ENCODE measurements at regions of chr9 and their contacts with region 1.

Region 1: GRCh38 chr9:6616951-6617602 is 28.5 kb downstream of the GLDC start:
- DNase-seq: no peak
- ATAC-seq: no peak
- H3K4me3 Mint-ChIP-seq: no peak overlapping the region
- H3K27ac Mint-ChIP-seq: no peak overlapping the region
- H3K4me1 Mint-ChIP-seq: no peaks in the 10 kb centered on the region
- H3K27me3 Mint-ChIP-seq: peaks cover 3% of the 10 kb centered on the region

Region 2: GRCh38 chr9:6153425-6153824 is 463.7 kb before region 1 on chr9:
- CTCF ChIA-PET with region 1: no interaction called
- POLR2A ChIA-PET with region 1: no interaction called
- intact Hi-C with region 1: no loop called
- DNase-seq: no peak
- ATAC-seq: peak; percentile 26
- H3K4me3 Mint-ChIP-seq: no peak overlapping the region
- H3K27ac Mint-ChIP-seq: no peak overlapping the region
- H3K4me1 Mint-ChIP-seq: no peaks in the 10 kb centered on the region
- H3K27me3 Mint-ChIP-seq: peaks cover 21% of the 10 kb centered on the region

Region 3: GRCh38 chr9:7336356-7337065 is 719.4 kb after region 1 on chr9:
- CTCF ChIA-PET with region 1: no interaction called
- POLR2A ChIA-PET with region 1: no interaction called
- intact Hi-C with region 1: loop called in 1 of 2 experiments (anchors 5 kb)
- DNase-seq: no peak
- ATAC-seq: no peak
- H3K4me3 Mint-ChIP-seq: no peak overlapping the region
- H3K27ac Mint-ChIP-seq: no peak overlapping the region
- H3K4me1 Mint-ChIP-seq: no peaks in the 10 kb centered on the region
- H3K27me3 Mint-ChIP-seq: peaks cover 11% of the 10 kb centered on the region

Measured in activated CD4-positive, alpha-beta T cell treated with anti-CD3 and anti-CD28 coated beads for 36 hours (primary cell).